ENCODE measurements at regions of chr13 and their contacts with region 1.

Region 1: DNA sequence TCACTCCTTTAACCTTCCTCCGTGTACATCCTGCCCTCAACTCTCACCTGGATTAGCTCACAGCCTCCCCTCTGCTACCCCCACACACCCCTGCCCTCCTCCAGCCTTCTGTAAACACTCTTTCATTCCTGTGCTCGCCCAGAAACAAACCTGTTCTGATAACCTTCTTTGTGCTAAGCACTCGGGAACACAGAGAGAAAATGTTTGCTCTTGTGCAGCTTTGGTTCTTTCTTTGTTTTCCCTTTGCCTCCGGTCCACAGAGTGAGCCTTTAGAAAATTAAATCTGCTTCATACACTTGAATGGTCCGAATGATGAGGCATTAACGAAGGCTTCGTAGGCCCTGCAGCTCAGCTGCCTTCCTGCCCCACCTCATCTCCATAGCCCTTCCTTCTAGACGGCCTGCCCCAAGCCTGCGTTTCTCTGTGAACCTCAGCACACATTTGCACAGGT is 6.6 kb upstream of the ZDHHC20 start:
- DNase-seq: peak in 1 of 2 experiments; percentile 50
- H3K4me3 ChIP-seq: no peak overlapping the region
- H3K27ac ChIP-seq: peak overlapping the region; percentile 4; the same call in 1 of the 2 replicates
- H3K4me1 ChIP-seq: peaks cover 0 to 12% (median 3%) of the 10 kb centered on the region in 4 experiments; a peak in 5 of 7 replicates
- H3K27me3 ChIP-seq: no peaks in the 10 kb centered on the region
- CTCF ChIP-seq: no peak
- EP300 ChIP-seq: no peak
- POLR2A ChIP-seq: peak in 1 of 2 experiments; percentile 31; a peak in 1 of 3 replicates
- RAD21 ChIP-seq: no peak

Region 2: GRCh38 chr13:21476893-21477472 is 11.2 kb after region 1 on chr13:
- CTCF ChIA-PET with region 1: interaction called, 27 read pairs
- POLR2A ChIA-PET with region 1: no interaction called
- DNase-seq: peak; percentile 90 to 96
- H3K4me3 ChIP-seq: peak overlapping the region; percentile 19 to 54 (median 28); a peak in 5 of 8 replicates
- H3K27ac ChIP-seq: no peak overlapping the region
- H3K4me1 ChIP-seq: 0 out of 7 replicates have a peak, but pooled peaks cover 0 to 2% (median 0%) of the 10 kb centered on the region in 4 experiments
- H3K27me3 ChIP-seq: no peaks in the 10 kb centered on the region
- CTCF ChIP-seq: peak; percentile 86 to 98 (median 95)
- EP300 ChIP-seq: 0 out of 3 replicates have a peak, but pooled peaks of 1 of the 2 experiments have one; percentile 38
- POLR2A ChIP-seq: peak in 1 of 2 experiments; percentile 40; a peak in 1 of 3 replicates
- RAD21 ChIP-seq: peak; percentile 82 to 87

Region 3: DNA sequence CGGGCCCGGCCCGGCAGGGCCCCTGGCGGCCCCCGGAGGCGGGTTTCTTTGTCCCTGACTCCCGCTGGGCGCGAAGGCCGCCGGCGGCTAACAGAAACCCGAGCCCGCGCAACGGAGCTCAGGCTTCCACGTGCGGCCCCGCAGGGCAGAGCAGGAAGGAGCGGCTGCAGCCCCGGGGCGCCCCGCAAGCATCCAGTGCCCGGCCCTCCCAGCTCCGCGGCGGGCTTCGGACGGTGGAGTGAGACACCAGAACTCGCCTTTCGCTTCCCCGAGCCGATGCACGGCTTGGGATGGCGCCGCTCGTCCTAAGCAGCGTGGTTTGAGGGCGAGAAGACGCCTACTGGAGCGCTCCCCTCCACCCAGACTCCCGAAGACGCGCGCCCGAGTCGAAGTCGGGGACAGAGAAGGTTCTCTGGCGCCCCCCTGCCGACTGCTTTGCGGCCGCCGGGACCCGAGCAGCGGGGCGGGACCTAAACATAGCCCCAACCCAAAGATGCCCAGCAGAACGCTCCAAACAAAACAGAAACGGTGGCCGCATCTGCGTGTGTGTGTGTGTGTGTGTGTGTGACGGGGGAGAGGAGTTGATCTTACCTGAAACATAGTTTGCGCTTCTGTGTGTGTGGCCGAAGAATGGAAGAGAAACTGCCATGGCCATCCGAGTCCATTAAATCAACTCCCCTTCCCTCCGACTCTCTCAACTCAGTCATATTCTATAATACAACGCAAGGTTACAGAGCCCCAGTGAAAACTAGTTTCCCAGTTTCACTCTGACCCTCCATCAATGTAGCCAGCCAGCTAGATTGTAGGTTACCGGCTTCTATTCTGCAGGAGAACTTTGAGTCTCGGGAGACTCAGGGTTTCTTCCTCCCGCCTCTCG is 204.5 kb after region 1 on chr13:
- CTCF ChIA-PET with region 1: no interaction called
- POLR2A ChIA-PET with region 1: no interaction called
- DNase-seq: no peak
- H3K4me3 ChIP-seq: peak overlapping the region; percentile 51 to 82 (median 68)
- H3K27ac ChIP-seq: no peak overlapping the region
- H3K4me1 ChIP-seq: peaks cover 3 to 22% (median 11%) of the 10 kb centered on the region in 4 experiments; a peak in 5 of 7 replicates
- H3K27me3 ChIP-seq: peaks cover 40 to 80% (median 68%) of the 10 kb centered on the region in 4 experiments
- CTCF ChIP-seq: no peak
- EP300 ChIP-seq: no peak
- POLR2A ChIP-seq: no peak
- RAD21 ChIP-seq: no peak; a peak in 1 of 4 replicates

Measured in H1 (cell line).